ENCODE measurements at regions of chr19 and their contacts with region 1.

Region 1: GRCh38 chr19:4916292-4917082 is 7.2 kb downstream of the UHRF1 start:
- DNase-seq: peak; percentile 55
- ATAC-seq: peak; percentile 75
- H3K4me3 Mint-ChIP-seq: peak overlapping the region; percentile 98
- H3K27ac Mint-ChIP-seq: peak overlapping the region; percentile 93
- H3K4me1 Mint-ChIP-seq: peaks cover 54% of the 10 kb centered on the region
- H3K27me3 Mint-ChIP-seq: no peaks in the 10 kb centered on the region
- CTCF ChIP-seq: no peak

Region 2: DNA sequence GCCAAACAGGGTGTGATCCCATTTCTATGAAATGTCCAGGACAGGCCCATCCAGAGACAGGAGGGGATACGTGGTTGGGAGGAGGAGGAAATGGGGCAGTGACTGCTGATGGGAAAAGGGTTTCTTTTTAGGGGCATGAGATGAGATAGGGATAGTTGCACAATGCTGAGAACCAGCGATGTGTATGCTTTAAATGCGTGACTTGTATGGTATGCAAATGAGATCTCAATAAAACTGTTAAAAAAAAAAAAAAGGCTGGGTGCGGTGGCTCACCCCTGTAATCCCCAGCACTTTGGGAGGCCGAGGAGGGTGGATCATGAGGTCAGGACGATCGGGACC is 75.2 kb before region 1 on chr19:
- CTCF ChIA-PET with region 1: no interaction called
- POLR2A ChIA-PET with region 1: no interaction called
- intact Hi-C with region 1: no loop called
- DNase-seq: no peak
- ATAC-seq: no peak
- H3K4me3 Mint-ChIP-seq: no peak overlapping the region
- H3K27ac Mint-ChIP-seq: peak overlapping the region; percentile 31
- H3K4me1 Mint-ChIP-seq: peaks cover 17% of the 10 kb centered on the region
- H3K27me3 Mint-ChIP-seq: no peaks in the 10 kb centered on the region
- CTCF ChIP-seq: no peak

Region 3: GRCh38 chr19:4939466-4939865 is 23.0 kb after region 1 on chr19:
- CTCF ChIA-PET with region 1: no interaction called
- POLR2A ChIA-PET with region 1: no interaction called
- intact Hi-C with region 1: no loop called
- DNase-seq: no peak
- ATAC-seq: no peak
- H3K4me3 Mint-ChIP-seq: no peak overlapping the region
- H3K27ac Mint-ChIP-seq: no peak overlapping the region
- H3K4me1 Mint-ChIP-seq: no peaks in the 10 kb centered on the region
- H3K27me3 Mint-ChIP-seq: no peaks in the 10 kb centered on the region
- CTCF ChIP-seq: no peak

Region 4: DNA sequence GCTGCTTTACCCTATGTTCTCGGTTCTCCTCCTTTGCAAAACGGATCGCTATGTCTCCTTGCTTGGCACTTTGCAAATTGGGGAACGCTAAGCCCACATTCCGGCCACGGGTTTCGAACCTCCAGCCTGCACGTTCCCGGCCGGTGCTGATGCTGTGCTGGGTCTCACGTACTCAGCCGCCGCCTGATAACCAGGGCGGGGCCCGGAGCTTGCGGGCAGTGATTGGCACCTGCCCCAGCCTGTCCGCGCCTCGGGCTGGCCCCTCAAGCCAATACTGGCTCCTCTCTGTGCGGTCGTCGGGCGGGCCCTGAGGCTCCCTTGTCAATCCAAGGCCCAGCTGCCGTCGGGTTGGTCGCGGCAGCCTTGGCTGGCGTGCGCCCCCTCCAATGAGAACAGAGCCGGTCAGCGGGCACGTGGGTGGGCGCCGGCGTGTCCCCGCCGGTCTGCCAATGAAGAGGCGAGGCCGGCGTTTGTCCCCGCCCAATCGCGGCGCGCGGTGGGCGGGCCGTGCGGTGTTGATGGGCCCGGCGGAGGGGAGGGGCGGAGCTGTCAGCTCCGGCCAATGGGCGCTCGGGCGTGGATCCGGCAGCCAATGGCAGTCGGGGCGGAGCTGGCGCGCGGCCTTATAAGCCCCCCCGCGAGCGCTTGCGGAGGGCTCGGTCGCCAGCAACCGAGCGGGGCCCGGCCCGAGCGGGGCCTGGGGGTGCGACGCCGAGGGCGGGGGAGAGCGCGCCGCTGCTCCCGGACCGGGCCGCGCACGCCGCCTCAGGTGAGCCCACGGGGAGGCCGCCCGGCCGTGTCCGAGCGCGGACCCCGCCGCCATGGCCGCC is 52.2 kb after region 1 on chr19 and contains the start of gene KDM4B:
- CTCF ChIA-PET with region 1: no interaction called
- POLR2A ChIA-PET with region 1: interaction called, 23 read pairs
- intact Hi-C with region 1: no loop called
- DNase-seq: peak; percentile 99
- ATAC-seq: peak; percentile 89
- H3K4me3 Mint-ChIP-seq: peak within 1 kb of the TSS; percentile 88
- H3K27ac Mint-ChIP-seq: peak within 1 kb of the TSS; percentile 88
- H3K4me1 Mint-ChIP-seq: peaks cover 31% of the 10 kb centered on the region
- H3K27me3 Mint-ChIP-seq: no peaks in the 10 kb centered on the region
- CTCF ChIP-seq: no peak
- total RNA-seq, gene KDM4B: 76.4 and 88.9 TPM in 2 replicates

Region 5: DNA sequence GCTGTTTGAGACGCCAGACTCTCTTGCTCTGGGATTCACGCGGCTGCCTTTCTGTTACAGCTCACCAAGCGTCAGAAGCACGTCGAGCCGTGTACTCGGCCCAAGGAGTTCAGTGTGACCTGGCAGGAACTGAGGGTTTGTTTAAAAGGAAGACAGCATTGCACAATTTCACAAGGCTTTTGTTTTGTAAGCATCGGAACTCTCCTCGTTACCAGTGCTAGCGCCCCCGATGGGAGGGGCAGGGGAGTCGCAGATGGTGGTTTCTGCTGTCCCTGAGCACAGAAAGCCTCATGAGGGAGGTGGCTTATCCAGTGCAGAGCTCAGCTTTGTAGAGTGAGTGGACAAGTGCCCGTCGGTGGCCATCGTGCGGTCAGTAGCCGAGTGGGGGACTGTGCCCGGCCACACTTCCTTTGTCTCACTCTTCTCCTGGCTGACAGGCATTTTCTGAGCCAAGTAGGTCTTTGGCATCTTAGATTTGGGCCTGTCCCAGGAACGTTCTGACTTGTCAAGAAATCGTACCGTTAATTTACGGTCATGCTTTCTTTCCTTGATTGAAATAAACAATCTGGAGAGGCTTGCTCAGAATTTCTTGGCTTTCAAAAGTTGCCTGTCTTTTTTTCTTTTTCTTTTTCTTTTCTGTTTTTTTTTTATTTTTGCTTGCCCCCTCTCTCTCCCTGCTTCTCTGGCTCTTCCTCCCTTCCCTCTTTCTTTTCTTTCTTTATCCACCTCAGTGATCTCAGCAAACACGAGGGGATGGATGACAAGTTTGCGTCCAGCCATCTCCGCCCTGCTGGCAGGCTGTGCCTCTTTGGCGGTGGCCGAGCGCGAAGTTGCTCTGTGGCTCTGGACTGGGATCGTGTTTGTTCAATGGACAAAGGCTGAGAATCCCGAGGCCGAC is 60.2 kb after region 1 on chr19:
- CTCF ChIA-PET with region 1: no interaction called
- POLR2A ChIA-PET with region 1: interaction called, 10 read pairs
- intact Hi-C with region 1: loop called (anchors 2 kb)
- DNase-seq: no peak
- ATAC-seq: peak; percentile 22
- H3K4me3 Mint-ChIP-seq: peak overlapping the region; percentile 57
- H3K27ac Mint-ChIP-seq: peak overlapping the region; percentile 41
- H3K4me1 Mint-ChIP-seq: peaks cover 60% of the 10 kb centered on the region
- H3K27me3 Mint-ChIP-seq: no peaks in the 10 kb centered on the region
- CTCF ChIP-seq: no peak

Region 6: GRCh38 chr19:5006201-5006600 is 89.7 kb after region 1 on chr19:
- CTCF ChIA-PET with region 1: no interaction called
- POLR2A ChIA-PET with region 1: interaction called, 12 read pairs
- intact Hi-C with region 1: no loop called
- DNase-seq: no peak
- ATAC-seq: no peak
- H3K4me3 Mint-ChIP-seq: no peak overlapping the region
- H3K27ac Mint-ChIP-seq: no peak overlapping the region
- H3K4me1 Mint-ChIP-seq: peaks cover 6% of the 10 kb centered on the region
- H3K27me3 Mint-ChIP-seq: no peaks in the 10 kb centered on the region
- CTCF ChIP-seq: no peak

Measured in activated B cell treated with CpG ODN at 0.5 μM for 24 hours (primary cell).